OCI-LY7 (cell line): ENCODE measurements at regions of chr6 and their contacts with region 1.

Region 1: GRCh38 chr6:75893058-75893775 is 144.2 kb downstream of the MYO6 start:
- DNase-seq: peak; percentile 64
- H3K4me3 ChIP-seq: no peak overlapping the region
- H3K27ac ChIP-seq: no peak overlapping the region
- H3K4me1 ChIP-seq: no peaks in the 10 kb centered on the region
- CTCF ChIP-seq: peak; percentile 91

Region 2: GRCh38 chr6:76230711-76231110 is 337.5 kb after region 1 on chr6:
- CTCF ChIA-PET with region 1: no interaction called
- POLR2A ChIA-PET with region 1: no interaction called
- intact Hi-C with region 1: no loop called
- DNase-seq: no peak
- H3K4me3 ChIP-seq: no peak overlapping the region
- H3K27ac ChIP-seq: no peak overlapping the region
- H3K4me1 ChIP-seq: no peaks in the 10 kb centered on the region
- CTCF ChIP-seq: no peak

Region 3: GRCh38 chr6:76518443-76518842 is 625.2 kb after region 1 on chr6:
- CTCF ChIA-PET with region 1: no interaction called
- POLR2A ChIA-PET with region 1: no interaction called
- intact Hi-C with region 1: no loop called
- DNase-seq: no peak
- H3K4me3 ChIP-seq: no peak overlapping the region
- H3K27ac ChIP-seq: no peak overlapping the region
- H3K4me1 ChIP-seq: no peaks in the 10 kb centered on the region
- CTCF ChIP-seq: no peak

Region 4: GRCh38 chr6:77457720-77458349 is 1564.6 kb after region 1 on chr6:
- CTCF ChIA-PET with region 1: no interaction called
- POLR2A ChIA-PET with region 1: no interaction called
- intact Hi-C with region 1: loop called (anchors 5 kb)
- DNase-seq: peak; percentile 41
- H3K4me3 ChIP-seq: no peak overlapping the region
- H3K27ac ChIP-seq: no peak overlapping the region
- H3K4me1 ChIP-seq: no peaks in the 10 kb centered on the region
- CTCF ChIP-seq: peak; percentile 77